H1 (cell line): ENCODE measurements at regions of chr13 and their contacts with region 1.

Region 1: DNA sequence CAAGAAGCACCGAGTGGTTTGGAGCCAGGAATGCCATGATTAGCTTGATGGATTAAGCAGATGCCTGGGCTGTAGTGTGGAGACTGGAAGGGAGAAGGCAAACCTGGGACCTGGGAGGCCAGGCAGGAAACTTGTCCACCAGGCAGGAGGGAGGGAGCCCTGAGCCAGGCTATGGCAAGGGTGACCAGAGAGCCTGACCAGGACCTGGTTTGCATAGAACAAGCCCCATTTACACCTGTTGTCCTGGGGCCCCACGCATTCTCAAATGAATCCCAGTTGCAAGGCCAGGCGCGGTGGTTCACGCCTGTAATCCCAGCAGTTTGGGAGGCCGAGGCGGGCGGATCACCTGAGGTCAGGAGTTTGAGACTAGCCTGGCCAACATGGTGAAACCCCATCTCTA is 50.2 kb upstream of the LATS2 start:
- DNase-seq: no peak
- H3K4me3 ChIP-seq: no peak overlapping the region
- H3K27ac ChIP-seq: no peak overlapping the region
- H3K4me1 ChIP-seq: peaks cover 0 to 7% (median 3%) of the 10 kb centered on the region in 4 experiments; a peak in 3 of 7 replicates
- H3K27me3 ChIP-seq: no peaks in the 10 kb centered on the region
- CTCF ChIP-seq: no peak
- EP300 ChIP-seq: no peak
- POLR2A ChIP-seq: no peak
- RAD21 ChIP-seq: no peak

Region 2: DNA sequence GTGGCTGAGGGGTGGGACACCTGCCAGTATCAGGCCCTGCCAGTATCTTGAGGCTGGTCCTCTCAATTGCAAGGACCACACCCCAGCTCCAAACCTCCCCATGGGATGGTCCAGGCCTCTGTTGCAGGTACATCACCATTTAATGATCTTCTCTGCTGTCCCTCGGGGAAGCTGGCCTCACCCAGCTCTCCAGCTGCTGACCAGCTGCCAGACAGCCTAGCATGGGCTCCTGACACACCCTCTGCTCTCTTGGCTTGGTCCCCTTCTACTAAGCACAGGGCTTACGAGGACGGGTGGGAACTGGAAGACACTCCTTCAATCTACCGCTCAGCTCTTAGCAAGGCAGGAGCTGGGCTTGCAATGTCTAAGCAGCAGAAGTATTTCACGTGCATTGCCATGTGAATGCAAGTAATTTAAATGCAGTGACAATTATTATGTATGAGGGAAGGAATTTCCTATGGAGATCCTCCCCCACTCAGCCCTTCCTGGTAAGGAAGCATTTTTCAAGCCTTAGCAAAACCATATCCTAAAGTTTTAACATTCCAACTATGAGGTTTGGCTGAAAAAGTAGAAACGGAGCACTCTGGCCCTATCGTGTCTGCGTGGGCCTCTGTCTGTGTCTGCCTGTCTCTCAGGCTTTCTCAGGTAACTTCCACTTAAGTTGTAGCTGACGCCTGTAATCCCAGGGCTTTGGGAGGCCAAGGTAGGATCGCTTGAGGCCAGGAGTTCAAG is 114.0 kb before region 1 on chr13:
- CTCF ChIA-PET with region 1: no interaction called
- POLR2A ChIA-PET with region 1: no interaction called
- DNase-seq: peak in 1 of 2 experiments; percentile 19
- H3K4me3 ChIP-seq: 0 out of 8 replicates have a peak overlapping the region, but pooled peaks of 1 of the 4 experiments have one; percentile 5
- H3K27ac ChIP-seq: peak overlapping the region; percentile 28; the same call in 1 of the 2 replicates
- H3K4me1 ChIP-seq: peaks cover 6 to 18% (median 10%) of the 10 kb centered on the region in 4 experiments
- H3K27me3 ChIP-seq: no peaks in the 10 kb centered on the region
- CTCF ChIP-seq: no peak
- EP300 ChIP-seq: no peak
- POLR2A ChIP-seq: no peak
- RAD21 ChIP-seq: no peak

Region 3: GRCh38 chr13:21124852-21125251 is 13.3 kb after region 1 on chr13:
- CTCF ChIA-PET with region 1: interaction called, 13 read pairs
- POLR2A ChIA-PET with region 1: interaction called, 3 read pairs
- DNase-seq: no peak
- H3K4me3 ChIP-seq: no peak overlapping the region
- H3K27ac ChIP-seq: no peak overlapping the region
- H3K4me1 ChIP-seq: peaks cover 0 to 11% (median 5%) of the 10 kb centered on the region in 4 experiments; a peak in 6 of 7 replicates
- H3K27me3 ChIP-seq: no peaks in the 10 kb centered on the region
- CTCF ChIP-seq: no peak
- EP300 ChIP-seq: no peak
- POLR2A ChIP-seq: no peak
- RAD21 ChIP-seq: no peak

Region 4: GRCh38 chr13:21282065-21282464 is 170.5 kb after region 1 on chr13:
- CTCF ChIA-PET with region 1: no interaction called
- POLR2A ChIA-PET with region 1: no interaction called
- DNase-seq: no peak
- H3K4me3 ChIP-seq: no peak overlapping the region
- H3K27ac ChIP-seq: no peak overlapping the region
- H3K4me1 ChIP-seq: 0 out of 7 replicates have a peak, but pooled peaks cover 0 to 2% (median 0%) of the 10 kb centered on the region in 4 experiments
- H3K27me3 ChIP-seq: no peaks in the 10 kb centered on the region
- CTCF ChIP-seq: no peak
- EP300 ChIP-seq: no peak
- POLR2A ChIP-seq: no peak
- RAD21 ChIP-seq: no peak